ENCODE measurements at regions of chr11 and their contacts with region 1.

Region 1: GRCh38 chr11:69683764-69684333 is 8.7 kb upstream of the LTO1 start:
- DNase-seq: peak; percentile 80
- ATAC-seq: peak; percentile 76
- H3K4me3 ChIP-seq: no peak overlapping the region
- H3K27ac ChIP-seq: no peak overlapping the region
- H3K4me1 ChIP-seq: peaks cover 50% of the 10 kb centered on the region
- H3K27me3 ChIP-seq: peaks cover 0 to 5% of the 10 kb centered on the region in 2 experiments; a peak in 2 of 5 replicates
- CTCF ChIP-seq: peak; percentile 96
- EP300 ChIP-seq: no peak
- POLR2A ChIP-seq: no peak
- RAD21 ChIP-seq: peak; percentile 87

Region 2: GRCh38 chr11:69101115-69101791 is 582.6 kb before region 1 on chr11:
- CTCF ChIA-PET with region 1: interaction called, 20 read pairs
- POLR2A ChIA-PET with region 1: no interaction called
- in situ Hi-C with region 1: loop called (anchors 10 kb)
- intact Hi-C with region 1: no loop called
- DNase-seq: peak; percentile 37
- ATAC-seq: peak; percentile 85
- H3K4me3 ChIP-seq: no peak overlapping the region
- H3K27ac ChIP-seq: no peak overlapping the region
- H3K4me1 ChIP-seq: no peaks in the 10 kb centered on the region
- H3K27me3 ChIP-seq: peaks cover 0 to 26% of the 10 kb centered on the region in 2 experiments; a peak in 3 of 5 replicates
- CTCF ChIP-seq: peak; percentile 98
- EP300 ChIP-seq: no peak
- POLR2A ChIP-seq: no peak
- RAD21 ChIP-seq: peak; percentile 98

Region 3: GRCh38 chr11:69480547-69481392 is 203.1 kb before region 1 on chr11:
- CTCF ChIA-PET with region 1: no interaction called
- POLR2A ChIA-PET with region 1: no interaction called
- in situ Hi-C with region 1: no loop called
- intact Hi-C with region 1: no loop called
- DNase-seq: peak; percentile 85
- ATAC-seq: peak; percentile 78
- H3K4me3 ChIP-seq: peak overlapping the region; percentile 25 to 69 (median 34); a peak in 5 of 6 replicates
- H3K27ac ChIP-seq: no peak overlapping the region
- H3K4me1 ChIP-seq: peaks cover 58% of the 10 kb centered on the region
- H3K27me3 ChIP-seq: no peaks in the 10 kb centered on the region
- CTCF ChIP-seq: no peak
- EP300 ChIP-seq: no peak
- POLR2A ChIP-seq: no peak
- RAD21 ChIP-seq: no peak; the same call in 1 of the 2 replicates

Region 4: DNA sequence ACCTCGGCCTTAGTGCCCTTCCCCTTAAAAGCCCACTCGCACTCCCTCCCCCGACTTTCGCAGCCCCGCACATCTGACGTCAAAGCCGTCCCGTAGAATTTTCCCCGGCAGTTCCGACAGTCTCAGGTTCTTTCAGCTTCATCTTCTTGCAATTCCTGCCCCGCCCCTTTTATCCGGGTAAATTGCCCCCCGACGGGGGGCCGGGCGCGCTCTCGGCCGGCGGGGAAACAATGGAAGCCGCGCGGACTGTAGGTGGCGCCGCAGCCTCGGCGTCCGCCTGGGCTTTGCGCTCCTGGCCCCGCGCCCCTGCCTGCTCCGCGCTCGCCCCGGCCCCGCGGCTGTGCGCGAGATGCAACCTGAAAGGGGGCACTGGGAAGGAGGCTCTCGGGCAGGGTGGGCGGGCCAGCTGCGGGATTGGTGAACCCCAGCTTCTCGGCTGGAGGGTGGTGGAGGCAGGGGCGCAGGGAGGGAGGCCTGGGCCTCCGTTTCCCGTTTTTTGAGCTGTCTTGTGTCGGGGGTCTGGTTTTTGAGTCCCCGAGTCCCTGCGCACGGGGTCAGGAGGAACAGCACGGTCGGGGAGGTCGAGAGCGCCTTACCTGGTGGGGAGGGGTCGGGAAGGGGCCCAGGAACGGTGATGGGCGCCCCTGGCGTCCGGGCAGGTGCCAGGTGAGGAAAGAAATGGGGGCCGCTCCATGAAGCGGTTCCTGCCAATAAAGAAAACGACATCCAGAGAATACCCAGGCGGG is 20.8 kb after region 1 on chr11:
- CTCF ChIA-PET with region 1: interaction called, 10 read pairs
- POLR2A ChIA-PET with region 1: interaction called, 4 read pairs
- in situ Hi-C with region 1: no loop called
- intact Hi-C with region 1: loop called (anchors 2 kb)
- DNase-seq: no peak
- ATAC-seq: no peak
- H3K4me3 ChIP-seq: no peak overlapping the region
- H3K27ac ChIP-seq: no peak overlapping the region
- H3K4me1 ChIP-seq: peaks cover 84% of the 10 kb centered on the region
- H3K27me3 ChIP-seq: no peaks in the 10 kb centered on the region
- CTCF ChIP-seq: no peak
- EP300 ChIP-seq: no peak
- POLR2A ChIP-seq: no peak
- RAD21 ChIP-seq: no peak

Region 5: DNA sequence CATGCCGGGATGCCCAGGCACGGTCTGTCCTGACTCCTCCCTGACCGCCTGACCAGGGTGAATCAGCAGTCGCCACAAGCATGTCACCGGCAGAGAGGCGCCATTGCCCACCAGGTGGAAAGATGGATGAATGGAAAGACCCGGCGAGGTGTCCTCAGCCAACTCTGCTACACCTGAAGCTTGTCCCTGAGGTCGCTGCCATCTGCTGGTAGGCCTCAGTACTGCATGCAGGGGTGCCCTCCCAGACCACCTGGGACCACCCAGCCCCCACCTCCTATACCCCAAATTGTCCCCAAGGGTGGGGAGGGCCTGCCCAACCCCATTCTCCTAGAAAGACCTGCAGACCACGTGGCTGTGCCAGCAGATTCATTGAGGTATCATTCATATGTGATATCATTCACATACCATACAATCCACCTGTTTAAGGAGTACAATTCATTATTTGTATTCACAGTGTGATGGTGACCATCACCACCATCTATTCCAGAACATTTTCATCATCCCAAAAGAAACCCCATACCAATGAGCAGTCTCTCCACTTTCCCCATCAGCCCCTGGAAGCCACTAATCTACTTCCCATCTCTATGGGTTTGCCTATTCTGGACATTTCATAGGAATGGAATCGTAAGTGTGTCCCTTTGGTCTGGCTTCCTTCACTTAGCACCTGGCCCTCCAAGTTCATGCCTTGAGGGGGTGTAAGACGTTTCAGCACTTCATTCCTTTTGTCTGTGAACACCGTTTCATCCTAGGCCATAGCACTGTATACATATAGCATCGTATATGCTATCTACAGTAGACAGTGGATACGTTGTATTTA is 117.9 kb after region 1 on chr11:
- CTCF ChIA-PET with region 1: interaction called, 18 read pairs
- POLR2A ChIA-PET with region 1: no interaction called
- in situ Hi-C with region 1: loop called (anchors 5 kb)
- intact Hi-C with region 1: no loop called
- DNase-seq: peak; percentile 34
- ATAC-seq: peak; percentile 70
- H3K4me3 ChIP-seq: no peak overlapping the region
- H3K27ac ChIP-seq: no peak overlapping the region
- H3K4me1 ChIP-seq: no peaks in the 10 kb centered on the region
- H3K27me3 ChIP-seq: no peaks in the 10 kb centered on the region; a peak in 1 of 5 replicates
- CTCF ChIP-seq: peak; percentile 76
- EP300 ChIP-seq: no peak
- POLR2A ChIP-seq: no peak
- RAD21 ChIP-seq: peak; percentile 40

Region 6: GRCh38 chr11:69841859-69842698 is 158.2 kb after region 1 on chr11:
- CTCF ChIA-PET with region 1: interaction called, 6 read pairs
- POLR2A ChIA-PET with region 1: no interaction called
- in situ Hi-C with region 1: no loop called
- intact Hi-C with region 1: loop called (anchors 5 kb)
- DNase-seq: no peak
- ATAC-seq: no peak; the same call in 2 of the 3 replicates
- H3K4me3 ChIP-seq: no peak overlapping the region
- H3K27ac ChIP-seq: no peak overlapping the region
- H3K4me1 ChIP-seq: no peaks in the 10 kb centered on the region
- H3K27me3 ChIP-seq: peaks cover 0 to 5% of the 10 kb centered on the region in 2 experiments; a peak in 2 of 5 replicates
- CTCF ChIP-seq: peak; percentile 60
- EP300 ChIP-seq: no peak
- POLR2A ChIP-seq: no peak
- RAD21 ChIP-seq: peak; percentile 32; the same call in 1 of the 2 replicates

Region 7: DNA sequence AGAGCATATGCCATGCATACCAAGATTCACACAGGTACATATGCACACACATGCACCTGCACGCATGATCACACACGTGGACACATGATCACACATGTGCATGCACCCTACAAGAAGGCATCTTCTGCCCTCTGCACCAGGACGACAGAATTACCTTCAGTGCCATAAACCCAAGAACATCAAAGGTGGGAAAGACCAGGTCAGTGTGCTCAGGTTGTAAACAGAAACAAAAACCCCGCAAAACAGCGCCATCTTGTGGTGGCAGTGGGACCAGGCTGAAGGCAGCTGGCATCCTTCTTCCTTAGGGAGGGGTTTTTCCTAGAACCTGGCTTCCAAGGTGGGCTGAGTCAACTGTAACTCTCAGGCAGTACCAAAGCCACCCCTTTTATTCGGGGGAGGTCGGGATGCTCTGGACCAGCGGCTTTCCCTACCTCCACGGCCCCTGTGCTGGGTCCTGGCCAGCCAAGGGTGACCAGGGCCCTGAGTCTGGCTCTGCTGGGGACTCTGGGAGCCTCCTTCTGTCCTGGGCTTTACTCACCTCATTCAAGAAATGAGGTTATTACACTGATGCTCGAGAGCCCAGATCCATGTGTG is 204.7 kb after region 1 on chr11:
- CTCF ChIA-PET with region 1: interaction called, 20 read pairs
- POLR2A ChIA-PET with region 1: no interaction called
- in situ Hi-C with region 1: loop called (anchors 5 kb)
- intact Hi-C with region 1: loop called (anchors 1 kb)
- DNase-seq: peak; percentile 52
- ATAC-seq: peak; percentile 60
- H3K4me3 ChIP-seq: no peak overlapping the region
- H3K27ac ChIP-seq: no peak overlapping the region
- H3K4me1 ChIP-seq: peaks cover 29% of the 10 kb centered on the region
- H3K27me3 ChIP-seq: peaks cover 4 to 54% of the 10 kb centered on the region in 2 experiments; a peak in 3 of 5 replicates
- CTCF ChIP-seq: peak; percentile 89
- EP300 ChIP-seq: no peak
- POLR2A ChIP-seq: no peak
- RAD21 ChIP-seq: no peak

Measured in HepG2 (cell line).